Activated B cell treated with CpG ODN at 0.5 μM for 24 hours (primary cell): ENCODE measurements at regions of chr1 and their contacts with region 1.

Region 1: DNA sequence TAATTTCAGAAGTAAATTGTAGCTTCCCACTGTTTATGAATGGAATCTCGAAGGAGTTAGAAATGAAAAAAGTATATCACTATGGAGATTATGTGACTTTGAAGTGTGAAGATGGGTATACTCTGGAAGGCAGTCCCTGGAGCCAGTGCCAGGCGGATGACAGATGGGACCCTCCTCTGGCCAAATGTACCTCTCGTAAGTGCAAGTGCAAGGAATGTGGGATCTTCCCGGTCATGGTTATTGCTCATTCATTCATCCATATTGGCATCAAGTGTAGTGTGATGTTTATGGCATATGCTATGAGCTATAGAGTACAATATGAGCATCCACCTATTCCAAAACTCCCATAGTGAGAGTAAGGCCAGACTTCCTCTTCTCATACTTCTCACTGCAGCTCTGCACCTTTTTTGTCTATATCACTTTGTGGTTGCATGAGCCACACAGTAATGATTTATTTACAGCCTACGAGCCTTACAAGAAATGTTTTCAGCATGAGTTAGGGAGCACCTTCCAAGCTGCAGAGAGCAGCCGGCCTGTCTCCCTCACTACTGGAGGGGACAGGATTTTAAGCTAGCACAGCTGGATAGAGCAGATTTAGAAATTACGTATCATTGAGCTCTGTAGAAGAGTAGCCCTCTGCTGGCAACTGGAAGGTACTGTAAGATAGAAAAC is 24.9 kb upstream of the CR1L start:
- DNase-seq: peak; percentile 25
- ATAC-seq: peak; percentile 99
- H3K4me3 Mint-ChIP-seq: no peak overlapping the region
- H3K27ac Mint-ChIP-seq: no peak overlapping the region
- H3K4me1 Mint-ChIP-seq: peaks cover 3% of the 10 kb centered on the region
- H3K27me3 Mint-ChIP-seq: no peaks in the 10 kb centered on the region
- CTCF ChIP-seq: peak; percentile 86

Region 2: DNA sequence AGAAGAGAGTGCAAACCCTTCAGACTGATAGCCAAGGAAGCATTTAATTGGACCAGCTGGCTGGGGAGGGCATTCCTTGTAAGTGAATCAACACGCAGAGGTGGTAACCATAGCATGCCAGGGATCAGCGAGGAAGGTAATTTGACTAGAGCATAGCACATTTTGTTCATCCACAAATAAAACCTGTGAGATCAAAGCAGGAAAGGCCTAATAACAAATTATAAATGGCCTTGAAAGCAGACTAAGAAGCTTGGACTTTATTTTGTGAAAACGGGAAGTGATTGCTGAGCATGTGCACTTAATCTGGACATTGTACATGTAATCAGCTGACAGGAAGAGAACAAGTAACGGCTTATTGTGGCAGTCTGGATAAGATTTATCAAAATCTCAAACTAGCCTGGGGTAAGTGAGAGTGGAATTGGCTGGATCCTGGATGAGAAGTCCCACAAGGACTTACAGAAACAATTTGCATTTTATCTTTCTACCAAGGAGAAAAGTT is 310.2 kb before region 1 on chr1:
- CTCF ChIA-PET with region 1: no interaction called
- POLR2A ChIA-PET with region 1: no interaction called
- intact Hi-C with region 1: no loop called
- DNase-seq: no peak
- ATAC-seq: peak; percentile 67
- H3K4me3 Mint-ChIP-seq: peak overlapping the region; percentile 77
- H3K27ac Mint-ChIP-seq: peak overlapping the region; percentile 91
- H3K4me1 Mint-ChIP-seq: peaks cover 27% of the 10 kb centered on the region
- H3K27me3 Mint-ChIP-seq: no peaks in the 10 kb centered on the region
- CTCF ChIP-seq: no peak

Region 3: DNA sequence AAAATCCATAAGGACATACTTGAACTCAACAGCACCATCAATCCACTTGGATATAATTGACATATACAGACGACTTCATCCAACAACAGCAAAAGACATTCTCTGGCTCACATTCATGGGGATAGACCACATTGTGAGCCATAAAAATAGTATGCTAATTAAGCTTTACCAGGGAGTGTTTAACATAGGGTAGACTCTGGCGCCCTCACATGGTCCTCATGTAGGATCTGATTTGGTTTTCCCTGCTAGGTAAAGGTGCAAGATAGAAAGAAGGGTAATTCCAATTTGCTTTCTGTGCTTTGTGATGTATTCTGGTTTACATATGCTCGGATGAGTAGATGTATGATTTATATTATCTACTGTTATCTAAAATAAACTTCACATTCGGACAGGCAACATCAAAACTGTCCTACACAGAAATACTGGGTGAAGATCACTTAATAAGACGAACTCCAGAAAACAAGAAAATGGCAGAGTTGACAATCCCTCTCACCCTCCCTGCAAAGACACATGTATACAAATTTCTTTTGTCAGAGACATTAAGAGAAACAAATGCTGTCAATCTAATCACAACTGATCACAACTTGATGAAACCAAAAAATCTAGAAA is 52.6 kb after region 1 on chr1:
- CTCF ChIA-PET with region 1: no interaction called
- POLR2A ChIA-PET with region 1: no interaction called
- intact Hi-C with region 1: loop called (anchors 2 kb)
- DNase-seq: no peak
- ATAC-seq: no peak
- H3K4me3 Mint-ChIP-seq: no peak overlapping the region
- H3K27ac Mint-ChIP-seq: no peak overlapping the region
- H3K4me1 Mint-ChIP-seq: peaks cover 20% of the 10 kb centered on the region
- H3K27me3 Mint-ChIP-seq: peaks cover 23% of the 10 kb centered on the region
- CTCF ChIP-seq: no peak